ENCODE measurements at regions of chr1 and their contacts with region 1.

Region 1: GRCh38 chr1:30473922-30474817 is 249.2 kb downstream of the MATN1 start:
- DNase-seq: no peak
- H3K4me3 ChIP-seq: no peak overlapping the region
- H3K27me3 ChIP-seq: peaks cover 1% of the 10 kb centered on the region; the same call in 1 of the 2 replicates
- CTCF ChIP-seq: no peak

Region 2: GRCh38 chr1:29381426-29381825 is 1092.7 kb before region 1 on chr1:
- CTCF ChIA-PET with region 1: no interaction called
- POLR2A ChIA-PET with region 1: interaction called, 26 read pairs
- DNase-seq: no peak
- H3K4me3 ChIP-seq: no peak overlapping the region
- H3K27me3 ChIP-seq: no peaks in the 10 kb centered on the region
- CTCF ChIP-seq: no peak